ENCODE measurements at regions of chr3 and their contacts with region 1.

Region 1: GRCh38 chr3:130276203-130276803 is 69.2 kb upstream of the COL6A5 start:
- DNase-seq: peak; percentile 65
- H3K4me3 ChIP-seq: peak overlapping the region in 1 of 2 experiments; percentile 28; a peak in 1 of 4 replicates
- H3K27ac ChIP-seq: no peak overlapping the region
- H3K4me1 ChIP-seq: no peaks in the 10 kb centered on the region; a peak in 1 of 4 replicates
- H3K27me3 ChIP-seq: no peaks in the 10 kb centered on the region
- CTCF ChIP-seq: peak; percentile 82
- EP300 ChIP-seq: no peak
- RAD21 ChIP-seq: peak; percentile 93

Region 2: DNA sequence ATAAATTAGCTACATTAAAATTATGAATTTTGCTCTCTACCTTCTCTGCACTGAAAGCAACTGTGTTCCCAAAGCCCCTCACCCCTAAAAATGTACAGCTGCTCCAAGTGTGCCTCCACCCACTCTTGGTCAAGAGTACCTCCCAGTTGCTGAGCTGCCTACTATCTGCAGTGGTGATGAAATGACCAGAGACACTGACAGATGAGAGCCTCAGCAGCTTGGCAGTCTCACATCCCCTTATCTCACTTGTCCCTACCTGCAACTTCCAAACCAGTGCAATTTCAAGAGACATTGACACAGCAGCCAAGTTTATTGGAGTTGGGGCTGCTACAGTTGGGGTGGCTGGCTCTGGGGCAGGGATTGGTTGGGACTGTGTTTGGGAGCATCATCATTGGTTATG is 16.9 kb after region 1 on chr3:
- CTCF ChIA-PET with region 1: interaction called, 10 read pairs
- POLR2A ChIA-PET with region 1: no interaction called
- DNase-seq: no peak
- H3K4me3 ChIP-seq: no peak overlapping the region
- H3K27ac ChIP-seq: no peak overlapping the region
- H3K4me1 ChIP-seq: no peaks in the 10 kb centered on the region
- H3K27me3 ChIP-seq: no peaks in the 10 kb centered on the region
- CTCF ChIP-seq: no peak
- EP300 ChIP-seq: no peak
- RAD21 ChIP-seq: no peak

Region 3: DNA sequence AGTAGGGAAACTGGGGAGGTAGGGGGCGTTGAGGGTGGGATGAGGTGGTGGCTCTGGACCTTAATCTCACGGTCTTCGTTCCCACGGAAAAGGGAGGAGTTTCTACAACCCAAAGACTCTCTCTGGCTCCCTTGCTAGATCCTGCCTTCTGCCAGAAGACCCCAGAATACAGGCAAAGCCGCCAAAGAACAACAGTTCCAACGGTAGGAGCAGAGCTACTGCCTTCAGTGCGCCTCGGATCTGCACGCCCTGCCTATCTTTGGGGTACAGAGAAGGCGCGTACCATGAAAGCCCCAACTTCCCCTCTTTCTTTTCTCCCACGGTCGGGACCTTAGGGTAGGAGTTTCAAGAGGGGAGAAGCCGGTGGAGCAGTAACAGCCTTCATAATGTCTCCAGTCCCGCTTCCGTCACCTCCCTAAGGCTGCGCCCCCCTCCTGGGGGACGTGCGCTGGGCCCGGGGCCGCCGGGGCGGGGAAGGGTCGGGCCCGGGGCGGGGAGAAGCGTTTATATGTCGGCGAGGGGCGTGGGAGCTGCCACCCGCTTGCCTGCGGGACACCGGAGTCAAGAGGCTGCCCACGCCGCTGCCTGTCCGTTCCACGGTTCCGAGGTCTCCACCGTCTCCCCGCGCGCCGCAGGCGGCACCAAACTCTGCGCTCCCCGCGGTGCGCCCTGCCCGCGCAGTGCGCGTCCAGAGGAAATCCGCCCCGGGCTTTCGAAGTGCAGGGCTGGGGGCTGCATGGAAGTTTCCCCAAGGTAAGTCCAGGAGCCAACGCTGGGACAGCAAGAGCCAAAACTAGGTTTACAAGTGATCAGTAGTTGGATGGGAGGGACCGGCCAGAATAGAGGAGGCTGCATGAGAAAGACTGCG is 240.6 kb after region 1 on chr3 and contains the start of gene COL6A6:
- CTCF ChIA-PET with region 1: interaction called, 10 read pairs
- POLR2A ChIA-PET with region 1: no interaction called
- DNase-seq: peak; percentile 31
- H3K4me3 ChIP-seq: no peak within 1 kb of the TSS
- H3K27ac ChIP-seq: no peak within 1 kb of the TSS
- H3K4me1 ChIP-seq: no peaks in the 10 kb centered on the region
- H3K27me3 ChIP-seq: no peaks in the 10 kb centered on the region
- CTCF ChIP-seq: no peak
- EP300 ChIP-seq: no peak
- RAD21 ChIP-seq: no peak
- polyA plus RNA-seq, gene COL6A6: not detected in 2 replicates

Region 4: GRCh38 chr3:130539005-130539404 is 262.7 kb after region 1 on chr3:
- CTCF ChIA-PET with region 1: interaction called, 125 read pairs
- POLR2A ChIA-PET with region 1: no interaction called
- DNase-seq: peak; percentile 68
- H3K4me3 ChIP-seq: peak overlapping the region in 1 of 2 experiments; percentile 51; a peak in 1 of 4 replicates
- H3K27ac ChIP-seq: no peak overlapping the region
- H3K4me1 ChIP-seq: no peaks in the 10 kb centered on the region
- H3K27me3 ChIP-seq: no peaks in the 10 kb centered on the region
- CTCF ChIP-seq: peak; percentile 66
- EP300 ChIP-seq: no peak
- RAD21 ChIP-seq: peak; percentile 75

Region 5: GRCh38 chr3:130565224-130565623 is 288.9 kb after region 1 on chr3:
- CTCF ChIA-PET with region 1: interaction called, 14 read pairs
- POLR2A ChIA-PET with region 1: no interaction called
- DNase-seq: no peak
- H3K4me3 ChIP-seq: no peak overlapping the region
- H3K27ac ChIP-seq: no peak overlapping the region
- H3K4me1 ChIP-seq: no peaks in the 10 kb centered on the region
- H3K27me3 ChIP-seq: no peaks in the 10 kb centered on the region
- CTCF ChIP-seq: no peak
- EP300 ChIP-seq: no peak
- RAD21 ChIP-seq: no peak